ENCODE measurements at regions of chr7 and their contacts with region 1.

Region 1: GRCh38 chr7:37208528-37208927 is 240.1 kb downstream of the ELMO1 start:
- DNase-seq: peak in 5 of 9 experiments; percentile 31 to 56 (median 44)
- ATAC-seq: peak; percentile 54
- H3K4me3 ChIP-seq: no peak overlapping the region
- H3K4me3 Mint-ChIP-seq: no peak overlapping the region
- H3K27ac ChIP-seq: no peak overlapping the region
- H3K27ac Mint-ChIP-seq: peak overlapping the region; percentile 8
- H3K4me1 ChIP-seq: no peaks in the 10 kb centered on the region
- H3K4me1 Mint-ChIP-seq: no peaks in the 10 kb centered on the region
- H3K27me3 ChIP-seq: no peaks in the 10 kb centered on the region
- H3K27me3 Mint-ChIP-seq: no peaks in the 10 kb centered on the region
- CTCF ChIP-seq: no peak

Region 2: DNA sequence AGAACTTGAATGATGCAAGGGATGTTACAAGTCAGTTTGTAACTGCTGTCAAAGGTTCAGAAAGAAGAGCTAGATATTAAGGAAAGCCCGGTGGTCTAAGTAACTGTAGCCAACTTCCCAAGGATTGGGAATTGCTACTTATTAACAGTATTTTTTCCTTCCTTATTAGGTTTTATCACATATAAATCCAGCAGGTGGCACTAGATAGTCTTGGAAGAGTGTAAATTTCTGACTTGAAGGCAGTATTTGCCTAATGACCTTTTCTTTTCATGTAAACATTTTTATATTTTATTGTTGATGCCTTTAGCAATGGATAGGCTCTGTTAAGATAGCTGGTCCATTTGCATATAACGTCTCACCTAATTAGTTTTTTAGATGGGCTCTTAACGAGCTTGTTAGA is 767.6 kb before region 1 on chr7:
- CTCF ChIA-PET with region 1: interaction called, 10 read pairs
- POLR2A ChIA-PET with region 1: no interaction called
- intact Hi-C with region 1: no loop called
- DNase-seq: peak in 2 of 9 experiments; percentile 17 to 34
- ATAC-seq: no peak
- H3K4me3 ChIP-seq: no peak overlapping the region
- H3K4me3 Mint-ChIP-seq: no peak overlapping the region
- H3K27ac ChIP-seq: no peak overlapping the region
- H3K27ac Mint-ChIP-seq: no peak overlapping the region
- H3K4me1 ChIP-seq: no peaks in the 10 kb centered on the region
- H3K4me1 Mint-ChIP-seq: no peaks in the 10 kb centered on the region
- H3K27me3 ChIP-seq: no peaks in the 10 kb centered on the region
- H3K27me3 Mint-ChIP-seq: no peaks in the 10 kb centered on the region
- CTCF ChIP-seq: no peak

Region 3: DNA sequence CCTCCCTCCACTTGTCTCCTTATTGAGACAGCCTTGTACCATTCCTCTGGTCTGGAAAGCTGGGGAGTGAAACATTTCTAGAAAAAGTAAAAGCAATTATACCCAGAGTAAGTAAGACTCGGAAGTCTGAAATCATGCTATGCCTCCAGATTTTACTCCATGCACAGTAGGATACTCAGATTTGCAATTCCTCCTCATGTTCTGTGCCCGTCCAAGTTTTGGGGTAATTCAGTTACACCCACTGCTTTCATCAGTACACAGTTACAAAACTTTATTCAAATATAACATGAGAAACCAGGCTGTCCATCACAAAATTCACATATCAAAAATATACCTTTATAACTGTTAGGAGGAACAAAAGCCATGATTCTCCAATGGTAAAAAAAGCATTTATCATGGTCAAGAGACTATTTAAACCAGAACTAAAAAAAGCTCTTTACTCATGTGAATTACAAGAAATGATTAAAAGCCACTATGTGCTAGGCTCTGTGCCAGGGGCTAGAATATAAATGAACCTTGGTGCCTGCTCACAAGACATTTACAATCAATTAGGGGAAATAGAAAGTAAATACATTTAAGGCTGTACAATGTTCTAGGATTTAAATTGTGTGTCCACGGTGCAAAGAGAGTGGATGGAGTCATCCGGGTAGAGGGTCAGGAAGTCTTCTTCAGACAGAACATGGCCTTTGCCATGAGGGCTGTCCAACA is 80.0 kb before region 1 on chr7:
- CTCF ChIA-PET with region 1: no interaction called
- POLR2A ChIA-PET with region 1: no interaction called
- intact Hi-C with region 1: no loop called
- DNase-seq: no peak
- ATAC-seq: no peak
- H3K4me3 ChIP-seq: no peak overlapping the region
- H3K4me3 Mint-ChIP-seq: no peak overlapping the region
- H3K27ac ChIP-seq: no peak overlapping the region
- H3K27ac Mint-ChIP-seq: peak overlapping the region; percentile 49
- H3K4me1 ChIP-seq: no peaks in the 10 kb centered on the region
- H3K4me1 Mint-ChIP-seq: peaks cover 12% of the 10 kb centered on the region
- H3K27me3 ChIP-seq: no peaks in the 10 kb centered on the region
- H3K27me3 Mint-ChIP-seq: no peaks in the 10 kb centered on the region
- CTCF ChIP-seq: no peak

Region 4: DNA sequence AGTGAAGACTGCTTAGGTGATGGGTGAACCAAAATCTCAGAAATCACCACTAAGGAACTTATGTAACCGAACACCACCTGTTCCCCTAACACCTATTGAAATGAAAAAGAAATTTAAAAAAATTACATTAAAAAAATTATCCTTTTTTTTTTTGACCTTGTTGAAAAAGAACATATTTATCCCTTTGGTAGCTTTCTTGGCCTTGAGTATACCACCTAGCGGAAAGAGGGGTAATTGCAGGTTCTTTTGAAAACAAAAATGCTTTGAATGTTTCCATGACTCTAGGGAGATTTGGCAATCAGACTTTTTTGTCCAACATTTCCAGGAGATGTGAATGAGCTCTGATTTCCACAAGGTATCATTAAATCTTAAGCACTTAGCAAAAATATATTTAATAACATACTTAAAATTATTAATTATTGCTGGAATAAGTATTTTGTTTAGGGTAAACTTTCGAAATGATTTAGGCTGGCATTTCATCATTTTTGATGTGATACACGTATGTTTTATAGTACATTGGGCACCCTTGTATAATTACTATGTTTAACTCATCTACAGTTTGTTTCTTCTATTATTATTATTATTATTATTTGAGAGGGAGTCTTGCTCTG is 287.2 kb after region 1 on chr7:
- CTCF ChIA-PET with region 1: no interaction called
- POLR2A ChIA-PET with region 1: no interaction called
- intact Hi-C with region 1: loop called in 1 of 2 experiments (anchors 1 kb)
- DNase-seq: peak in 2 of 9 experiments; percentile 42 to 53
- ATAC-seq: peak; percentile 56
- H3K4me3 ChIP-seq: no peak overlapping the region
- H3K4me3 Mint-ChIP-seq: no peak overlapping the region
- H3K27ac ChIP-seq: no peak overlapping the region
- H3K27ac Mint-ChIP-seq: no peak overlapping the region
- H3K4me1 ChIP-seq: no peaks in the 10 kb centered on the region
- H3K4me1 Mint-ChIP-seq: no peaks in the 10 kb centered on the region
- H3K27me3 ChIP-seq: peaks cover 0 to 2% of the 10 kb centered on the region in 2 experiments
- H3K27me3 Mint-ChIP-seq: no peaks in the 10 kb centered on the region
- CTCF ChIP-seq: peak; percentile 93

Region 5: GRCh38 chr7:37510043-37510634 is 301.6 kb after region 1 on chr7:
- CTCF ChIA-PET with region 1: no interaction called
- POLR2A ChIA-PET with region 1: no interaction called
- intact Hi-C with region 1: loop called in 1 of 2 experiments (anchors 1 kb)
- DNase-seq: peak in 2 of 9 experiments; percentile 38 to 53
- ATAC-seq: peak; percentile 57
- H3K4me3 ChIP-seq: no peak overlapping the region
- H3K4me3 Mint-ChIP-seq: no peak overlapping the region
- H3K27ac ChIP-seq: no peak overlapping the region
- H3K27ac Mint-ChIP-seq: no peak overlapping the region
- H3K4me1 ChIP-seq: no peaks in the 10 kb centered on the region
- H3K4me1 Mint-ChIP-seq: no peaks in the 10 kb centered on the region
- H3K27me3 ChIP-seq: no peaks in the 10 kb centered on the region
- H3K27me3 Mint-ChIP-seq: peaks cover 13% of the 10 kb centered on the region
- CTCF ChIP-seq: peak; percentile 80